Activated T-helper 2 cell treated with anti-CD3 and anti-CD28 coated beads, Interferon-gamma antibody, Interleukin-2, Interleukin-4, amounts not matched to agents 10 μg/mL and 5 μg/mL and 100 μg/mL, durations not matched to agents 14 hours and 24 hours and 36 hours (primary cell): ENCODE measurements at regions of chr6 and their contacts with region 1.

Region 1: DNA sequence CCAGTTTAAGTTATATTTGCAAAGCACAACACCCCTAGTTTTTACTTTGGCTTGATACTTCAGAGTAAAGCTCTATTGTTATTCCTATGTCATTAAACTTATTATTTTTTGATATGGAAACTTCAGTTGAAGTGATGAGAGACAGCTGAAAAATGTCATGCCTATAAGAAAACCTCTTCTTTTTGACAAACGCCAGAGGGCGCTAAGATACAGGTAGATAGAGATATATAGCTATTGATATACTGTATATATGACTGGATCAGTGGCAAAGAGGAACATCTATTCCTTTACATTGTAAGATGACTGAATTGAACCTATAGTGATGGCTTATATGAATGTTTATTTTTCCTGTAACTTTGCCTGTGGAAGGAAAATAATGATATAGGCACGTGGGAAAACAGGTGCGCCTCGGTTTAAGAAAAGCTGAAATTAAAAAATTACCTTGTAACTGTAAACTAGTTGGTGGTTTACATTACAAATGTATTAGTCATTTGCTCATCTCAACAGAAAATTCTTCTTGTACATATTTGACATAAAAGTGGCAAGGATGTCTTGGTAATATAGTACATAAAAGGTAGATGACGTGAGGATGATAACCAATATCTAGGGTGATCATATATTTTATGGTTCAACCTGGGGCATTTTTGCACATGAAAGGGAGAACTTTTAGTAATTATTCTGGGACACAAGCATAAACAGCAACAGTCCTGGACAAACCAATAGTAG is 74.1 kb downstream of the LAMA4 start:
- DNase-seq: peak; percentile 19
- H3K4me3 Mint-ChIP-seq: no peak overlapping the region
- H3K27ac Mint-ChIP-seq: no peak overlapping the region
- H3K4me1 Mint-ChIP-seq: no peaks in the 10 kb centered on the region
- H3K27me3 Mint-ChIP-seq: peaks cover 46% of the 10 kb centered on the region

Region 2: DNA sequence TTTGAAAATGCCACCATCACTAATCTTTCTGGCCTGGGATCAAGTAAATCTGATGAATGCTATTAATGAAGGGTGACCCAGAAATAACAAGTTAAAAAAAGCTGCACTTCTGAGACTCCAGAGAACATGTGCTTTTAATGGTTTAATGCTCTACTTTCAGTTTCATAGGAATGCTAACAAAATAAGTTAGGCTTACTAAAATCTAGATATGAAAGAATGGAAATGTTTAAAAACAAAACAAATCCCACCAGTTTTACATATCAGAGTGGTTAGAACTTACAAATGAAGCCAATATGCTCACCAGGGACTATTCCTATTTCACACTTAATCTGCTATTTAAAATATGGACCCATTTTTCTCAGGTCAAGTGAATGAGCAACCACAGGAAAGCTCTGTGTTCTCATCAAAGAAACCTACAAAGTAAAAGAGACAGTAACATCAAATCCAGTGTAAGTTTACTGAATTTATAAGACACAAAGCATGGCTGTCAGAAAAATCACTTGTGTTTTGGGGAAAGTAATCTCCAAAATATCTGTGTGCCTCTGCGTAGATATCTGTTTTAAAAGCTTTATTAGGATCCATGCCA is 347.3 kb before region 1 on chr6:
- intact Hi-C with region 1: no loop called
- DNase-seq: no peak
- H3K4me3 Mint-ChIP-seq: peak overlapping the region; percentile 19
- H3K27ac Mint-ChIP-seq: peak overlapping the region; percentile 86
- H3K4me1 Mint-ChIP-seq: peaks cover 77% of the 10 kb centered on the region
- H3K27me3 Mint-ChIP-seq: no peaks in the 10 kb centered on the region

Region 3: GRCh38 chr6:112029045-112029822 is 151.0 kb before region 1 on chr6:
- intact Hi-C with region 1: no loop called
- DNase-seq: peak; percentile 43
- H3K4me3 Mint-ChIP-seq: no peak overlapping the region
- H3K27ac Mint-ChIP-seq: peak overlapping the region; percentile 95
- H3K4me1 Mint-ChIP-seq: peaks cover 69% of the 10 kb centered on the region
- H3K27me3 Mint-ChIP-seq: no peaks in the 10 kb centered on the region

Region 4: GRCh38 chr6:112311950-112312547 is 131.8 kb after region 1 on chr6:
- intact Hi-C with region 1: loop called (anchors 1 kb)
- DNase-seq: no peak
- H3K4me3 Mint-ChIP-seq: no peak overlapping the region
- H3K27ac Mint-ChIP-seq: no peak overlapping the region
- H3K4me1 Mint-ChIP-seq: no peaks in the 10 kb centered on the region
- H3K27me3 Mint-ChIP-seq: peaks cover 33% of the 10 kb centered on the region